Common myeloid progenitor, CD34-positive (primary cell): ENCODE measurements at regions of chr4 and their contacts with region 1.

Region 1: GRCh38 chr4:115537387-115537786 is 424.0 kb upstream of the NDST4 start:
- DNase-seq: peak; percentile 25 to 57 (median 47)
- H3K4me3 ChIP-seq: no peak overlapping the region
- H3K27ac ChIP-seq: no peak overlapping the region
- H3K4me1 ChIP-seq: peaks cover 0 to 4% (median 0%) of the 10 kb centered on the region in 4 experiments
- H3K27me3 ChIP-seq: no peaks in the 10 kb centered on the region

Region 2: GRCh38 chr4:115234405-115235093 is 302.8 kb before region 1 on chr4:
- CTCF ChIA-PET with region 1: interaction called, 35 read pairs
- POLR2A ChIA-PET with region 1: no interaction called
- DNase-seq: peak; percentile 50 to 69 (median 65)
- H3K4me3 ChIP-seq: peak overlapping the region in 1 of 7 experiments; percentile 28
- H3K27ac ChIP-seq: no peak overlapping the region
- H3K4me1 ChIP-seq: peaks cover 2 to 35% (median 20%) of the 10 kb centered on the region in 4 experiments
- H3K27me3 ChIP-seq: no peaks in the 10 kb centered on the region

Region 3: GRCh38 chr4:115575851-115576250 is 38.5 kb after region 1 on chr4:
- CTCF ChIA-PET with region 1: no interaction called
- POLR2A ChIA-PET with region 1: no interaction called
- DNase-seq: no peak
- H3K4me3 ChIP-seq: no peak overlapping the region
- H3K27ac ChIP-seq: no peak overlapping the region
- H3K4me1 ChIP-seq: no peaks in the 10 kb centered on the region
- H3K27me3 ChIP-seq: no peaks in the 10 kb centered on the region